ENCODE measurements at regions of chr1 and their contacts with region 1.

Region 1: GRCh38 chr1:228457396-228458176 is 29.6 kb upstream of the RNF187 start:
- DNase-seq: peak; percentile 78 to 97
- ATAC-seq: peak; percentile 84 to 93 (median 88)
- H3K4me3 ChIP-seq: peak overlapping the region; percentile 61
- H3K4me3 Mint-ChIP-seq: peak overlapping the region; percentile 99
- H3K27ac ChIP-seq: peak overlapping the region; percentile 96
- H3K27ac Mint-ChIP-seq: peak overlapping the region; percentile 99
- H3K4me1 ChIP-seq: peaks cover 24% of the 10 kb centered on the region
- H3K4me1 Mint-ChIP-seq: peaks cover 32% of the 10 kb centered on the region in 2 donors
- H3K27me3 ChIP-seq: no peaks in the 10 kb centered on the region
- H3K27me3 Mint-ChIP-seq: peaks cover 0 to 2% of the 10 kb centered on the region in 2 donors
- CTCF ChIP-seq: no peak

Region 2: DNA sequence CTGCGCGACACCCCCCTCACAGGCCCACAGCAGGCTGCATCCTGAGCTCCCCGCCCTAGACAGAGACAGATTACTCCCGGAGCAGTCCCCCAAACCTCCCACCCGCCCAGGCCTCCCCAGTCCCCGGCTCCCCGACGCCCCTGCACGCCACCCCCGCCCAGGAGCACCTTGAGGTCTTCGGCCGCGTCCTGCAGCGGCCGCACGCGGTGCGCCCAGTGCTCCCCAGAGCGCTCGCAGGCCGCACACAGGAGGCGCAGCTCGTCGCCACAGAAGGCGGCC is 51.7 kb before region 1 on chr1:
- intact Hi-C with region 1: loop called (anchors 5 kb)
- DNase-seq: no peak
- ATAC-seq: peak in 2 of 3 donors; percentile 1 to 22
- H3K4me3 ChIP-seq: peak overlapping the region; percentile 82
- H3K4me3 Mint-ChIP-seq: peak overlapping the region; percentile 93
- H3K27ac ChIP-seq: no peak overlapping the region
- H3K27ac Mint-ChIP-seq: peak overlapping the region; percentile 75 to 89
- H3K4me1 ChIP-seq: peaks cover 57% of the 10 kb centered on the region
- H3K4me1 Mint-ChIP-seq: peaks cover 56 to 71% of the 10 kb centered on the region in 2 donors
- H3K27me3 ChIP-seq: no peaks in the 10 kb centered on the region
- H3K27me3 Mint-ChIP-seq: no peaks in the 10 kb centered on the region
- CTCF ChIP-seq: no peak

Region 3: GRCh38 chr1:228486596-228487335 is 29.2 kb after region 1 on chr1:
- intact Hi-C with region 1: loop called (anchors 2 kb)
- DNase-seq: peak; percentile 71 to 87
- ATAC-seq: peak; percentile 76 to 88 (median 77)
- H3K4me3 ChIP-seq: peak overlapping the region; percentile 92
- H3K4me3 Mint-ChIP-seq: peak overlapping the region; percentile 98
- H3K27ac ChIP-seq: peak overlapping the region; percentile 100
- H3K27ac Mint-ChIP-seq: peak overlapping the region; percentile 98 to 99
- H3K4me1 ChIP-seq: peaks cover 26% of the 10 kb centered on the region
- H3K4me1 Mint-ChIP-seq: peaks cover 16 to 37% of the 10 kb centered on the region in 2 donors
- H3K27me3 ChIP-seq: no peaks in the 10 kb centered on the region
- H3K27me3 Mint-ChIP-seq: no peaks in the 10 kb centered on the region
- CTCF ChIP-seq: no peak

Region 4: DNA sequence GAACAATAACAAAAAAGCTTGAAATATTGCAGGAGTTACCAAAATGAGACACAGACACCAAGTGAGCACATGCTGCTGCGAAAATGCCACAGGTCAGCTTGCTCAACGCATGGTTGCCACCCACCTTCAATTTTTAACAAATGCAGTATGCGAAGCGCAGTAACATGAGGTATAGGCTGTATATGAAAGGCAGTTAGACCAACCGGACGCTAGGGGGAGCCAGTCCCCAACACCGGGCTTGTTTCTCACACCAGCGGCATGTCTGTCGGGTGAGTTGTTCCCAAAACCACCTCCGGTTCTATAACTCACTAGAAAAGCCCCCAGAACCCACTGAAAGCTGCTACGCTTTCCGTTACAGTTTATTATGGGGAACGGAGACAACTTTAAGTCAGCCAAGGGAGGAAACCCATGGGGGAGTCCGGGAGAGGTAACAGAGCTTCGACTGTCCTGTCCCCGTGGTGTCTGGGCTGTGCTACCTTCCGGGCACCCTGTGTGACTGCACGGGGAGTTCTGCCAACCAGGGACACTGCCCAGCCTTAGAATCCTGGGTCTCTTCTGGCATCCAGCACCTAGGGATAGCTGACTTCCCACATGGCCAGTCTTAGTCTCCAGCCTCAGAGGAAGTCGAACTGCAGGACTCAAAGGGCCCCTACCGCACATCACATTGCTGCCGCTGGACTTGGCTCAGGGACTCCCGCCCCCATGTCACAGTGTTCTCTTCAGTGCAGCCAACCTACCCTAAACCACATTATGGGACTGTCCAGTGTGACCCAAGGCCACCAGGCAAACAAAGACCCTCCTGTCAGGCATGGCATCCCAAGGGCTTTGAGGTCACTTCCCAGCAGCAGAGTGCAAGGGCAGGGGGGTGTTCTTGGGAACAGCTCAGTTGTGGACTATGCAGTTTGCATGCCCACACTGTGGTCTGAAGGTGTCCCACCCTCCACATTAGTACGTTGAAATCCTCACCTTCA is 43.6 kb after region 1 on chr1:
- intact Hi-C with region 1: loop called (anchors 1 kb)
- DNase-seq: peak; percentile 86 to 96
- ATAC-seq: peak; percentile 97 to 98 (median 98)
- H3K4me3 ChIP-seq: peak overlapping the region; percentile 36
- H3K4me3 Mint-ChIP-seq: peak overlapping the region; percentile 82
- H3K27ac ChIP-seq: peak overlapping the region; percentile 55
- H3K27ac Mint-ChIP-seq: peak overlapping the region; percentile 77 to 83
- H3K4me1 ChIP-seq: peaks cover 18% of the 10 kb centered on the region
- H3K4me1 Mint-ChIP-seq: peaks cover 16 to 35% of the 10 kb centered on the region in 2 donors
- H3K27me3 ChIP-seq: no peaks in the 10 kb centered on the region
- H3K27me3 Mint-ChIP-seq: no peaks in the 10 kb centered on the region
- CTCF ChIP-seq: peak; percentile 96

Region 5: DNA sequence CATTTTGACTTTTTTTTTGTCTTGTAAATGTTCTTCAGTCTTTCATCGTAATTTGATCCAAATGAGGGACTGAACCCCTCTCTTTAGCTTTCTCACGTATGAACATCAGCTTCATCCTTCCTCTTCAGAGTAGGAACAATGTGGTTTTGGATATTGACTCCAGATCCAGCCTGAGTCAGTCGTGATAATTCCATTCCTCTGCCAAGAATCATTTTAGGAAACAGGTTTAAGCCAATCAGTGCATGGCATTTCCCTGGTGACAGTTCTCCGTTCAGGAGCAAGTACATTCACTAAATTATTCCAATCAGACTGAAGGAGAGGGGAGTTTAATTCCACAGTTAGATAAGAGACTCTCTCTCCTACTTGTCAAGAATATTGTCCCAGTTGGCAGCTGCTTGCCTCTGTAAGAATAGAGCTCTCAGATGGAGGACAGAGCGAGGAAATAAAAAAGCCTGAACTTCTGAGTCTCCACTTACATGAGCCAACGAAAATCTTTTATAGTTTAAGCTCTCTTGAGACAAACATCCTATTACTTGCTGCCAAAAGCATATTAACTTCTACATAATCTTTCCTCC is 296.3 kb after region 1 on chr1:
- intact Hi-C with region 1: no loop called
- DNase-seq: no peak
- ATAC-seq: no peak
- H3K4me3 ChIP-seq: no peak overlapping the region
- H3K4me3 Mint-ChIP-seq: no peak overlapping the region
- H3K27ac ChIP-seq: no peak overlapping the region
- H3K27ac Mint-ChIP-seq: no peak overlapping the region
- H3K4me1 ChIP-seq: peaks cover 5% of the 10 kb centered on the region
- H3K4me1 Mint-ChIP-seq: peaks cover 6 to 11% of the 10 kb centered on the region in 2 donors
- H3K27me3 ChIP-seq: peaks cover 16% of the 10 kb centered on the region
- H3K27me3 Mint-ChIP-seq: peaks cover 38 to 72% of the 10 kb centered on the region in 2 donors
- CTCF ChIP-seq: no peak

Measured in natural killer cell (primary cell).